ENCODE measurements at regions of chr7 and their contacts with region 1.

Region 1: GRCh38 chr7:82044497-82045080 is 274.7 kb upstream of the HGF start:
- DNase-seq: peak; percentile 46
- H3K4me3 Mint-ChIP-seq: no peak overlapping the region
- H3K27ac Mint-ChIP-seq: no peak overlapping the region
- H3K4me1 Mint-ChIP-seq: no peaks in the 10 kb centered on the region
- H3K27me3 Mint-ChIP-seq: no peaks in the 10 kb centered on the region

Region 2: DNA sequence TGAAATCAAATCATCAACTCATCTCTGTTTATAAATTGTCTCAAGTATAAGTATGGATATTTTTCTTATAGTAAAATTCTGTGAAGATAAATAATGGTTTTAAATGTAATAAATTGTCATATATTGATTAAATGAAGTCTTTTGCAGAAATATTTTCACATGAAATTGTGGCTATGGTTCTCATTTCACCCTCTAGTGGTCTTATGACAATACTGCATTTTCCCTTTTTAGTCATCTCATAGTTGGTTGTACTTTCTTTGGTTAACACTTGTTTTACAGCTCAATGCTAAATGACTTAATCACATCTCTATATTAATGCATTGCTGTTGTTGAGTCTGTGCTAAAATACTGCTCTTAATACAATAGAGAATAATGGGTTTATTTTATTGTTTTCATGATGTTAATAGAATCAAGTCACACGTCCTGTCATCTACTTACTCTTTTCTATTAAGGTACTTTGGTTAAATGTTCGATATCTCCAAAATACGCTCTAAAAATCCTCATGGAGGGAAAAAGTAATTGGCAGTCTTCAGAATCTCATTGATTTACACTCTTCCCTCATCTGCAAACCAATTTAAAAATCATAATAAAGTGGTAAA is 437.0 kb after region 1 on chr7:
- CTCF ChIA-PET with region 1: no interaction called
- intact Hi-C with region 1: loop called (anchors 5 kb)
- DNase-seq: no peak
- H3K4me3 Mint-ChIP-seq: no peak overlapping the region
- H3K27ac Mint-ChIP-seq: no peak overlapping the region
- H3K4me1 Mint-ChIP-seq: no peaks in the 10 kb centered on the region
- H3K27me3 Mint-ChIP-seq: peaks cover under 1% of the 10 kb centered on the region

Region 3: GRCh38 chr7:82572195-82572880 is 527.7 kb after region 1 on chr7:
- CTCF ChIA-PET with region 1: no interaction called
- intact Hi-C with region 1: loop called (anchors 1 kb)
- DNase-seq: peak; percentile 84
- H3K4me3 Mint-ChIP-seq: no peak overlapping the region
- H3K27ac Mint-ChIP-seq: no peak overlapping the region
- H3K4me1 Mint-ChIP-seq: no peaks in the 10 kb centered on the region
- H3K27me3 Mint-ChIP-seq: no peaks in the 10 kb centered on the region

Region 4: DNA sequence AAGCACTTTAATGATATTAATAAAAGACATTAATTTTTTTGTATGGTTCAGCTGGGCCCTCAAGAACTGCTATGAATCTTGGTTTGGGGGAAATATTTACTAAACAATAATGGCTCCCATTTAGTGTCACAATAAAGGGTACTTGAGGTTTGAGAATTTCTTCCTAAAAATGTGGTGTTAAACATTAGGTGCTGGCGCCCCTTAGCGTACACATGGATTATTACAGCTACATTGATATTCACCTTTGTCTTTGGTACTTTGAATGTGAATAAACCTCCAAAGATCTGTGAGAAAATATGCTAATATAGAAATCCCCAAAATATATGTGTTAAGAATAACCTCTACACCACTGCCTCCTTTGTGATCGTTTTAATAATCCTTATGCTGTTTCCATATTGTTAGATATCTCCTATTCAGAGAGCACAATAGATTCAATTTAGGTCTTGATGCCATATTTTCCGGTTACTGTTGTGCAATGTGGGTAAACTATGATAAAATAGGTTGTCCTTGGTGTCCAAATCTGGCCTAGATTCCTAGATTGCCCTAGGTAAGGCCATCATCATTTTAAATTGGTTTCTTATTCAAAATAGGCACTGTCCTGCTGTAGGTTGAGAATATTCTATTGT is 560.8 kb after region 1 on chr7:
- CTCF ChIA-PET with region 1: no interaction called
- intact Hi-C with region 1: loop called (anchors 1 kb)
- DNase-seq: peak; percentile 20
- H3K4me3 Mint-ChIP-seq: no peak overlapping the region
- H3K27ac Mint-ChIP-seq: no peak overlapping the region
- H3K4me1 Mint-ChIP-seq: no peaks in the 10 kb centered on the region
- H3K27me3 Mint-ChIP-seq: no peaks in the 10 kb centered on the region